CD8-positive, alpha-beta memory T cell (primary cell): ENCODE measurements at regions of chr1 and their contacts with region 1.

Region 1: DNA sequence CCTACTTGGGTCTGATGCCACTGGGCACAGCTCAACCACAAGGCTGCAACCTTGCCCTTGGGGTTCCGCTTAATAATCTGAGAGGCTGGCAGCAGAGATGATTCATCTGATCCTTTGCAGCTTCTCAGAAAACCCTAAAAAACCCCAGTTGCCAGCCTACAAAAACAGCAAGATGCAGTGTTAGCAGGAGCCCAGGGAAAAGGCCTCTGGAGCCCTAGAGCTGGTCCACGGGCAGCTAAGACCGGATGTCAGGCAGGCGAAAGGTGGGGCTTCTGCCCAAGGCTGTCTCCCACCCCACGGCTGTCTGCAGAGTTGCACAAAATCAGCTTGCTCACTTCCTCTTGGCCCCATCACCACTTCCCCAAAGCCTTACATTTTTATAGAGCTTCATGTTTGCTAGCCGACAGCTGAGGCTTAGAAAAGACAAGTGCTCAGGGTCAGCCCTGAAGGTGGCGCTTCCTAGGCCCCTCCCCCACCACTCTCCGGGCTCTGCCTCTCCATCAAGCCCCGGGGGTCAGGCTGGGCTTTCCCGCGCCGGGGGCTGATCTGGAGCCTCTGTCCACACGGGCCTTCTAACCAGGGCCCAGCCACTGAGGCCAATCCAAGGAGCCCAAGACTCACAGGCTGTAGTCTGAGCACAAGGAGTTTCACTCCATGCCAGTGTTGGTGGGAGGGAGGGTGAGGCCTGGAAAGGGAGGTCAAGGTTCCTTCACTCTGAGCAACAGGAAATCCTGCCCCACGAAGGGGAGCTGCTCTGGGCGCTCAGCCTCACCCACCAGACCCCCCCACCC is 4.2 kb upstream of the ADORA3 start:
- DNase-seq: peak; percentile 43 to 72 (median 52)
- H3K4me3 ChIP-seq: peak overlapping the region; percentile 68
- H3K4me3 Mint-ChIP-seq: peak overlapping the region; percentile 22 to 88 (median 83)
- H3K27ac ChIP-seq: peak overlapping the region; percentile 87
- H3K27ac Mint-ChIP-seq: peak overlapping the region; percentile 74 to 99 (median 96)
- H3K4me1 ChIP-seq: peaks cover 88% of the 10 kb centered on the region
- H3K4me1 Mint-ChIP-seq: peaks cover 57 to 61% (median 60%) of the 10 kb centered on the region in 3 donors
- H3K27me3 ChIP-seq: no peaks in the 10 kb centered on the region
- H3K27me3 Mint-ChIP-seq: no peaks in the 10 kb centered on the region

Region 2: GRCh38 chr1:111448918-111449702 is 58.5 kb before region 1 on chr1 and contains the starts of genes ATP5PB and WDR77:
- CTCF ChIA-PET with region 1: interaction called, 38 read pairs
- POLR2A ChIA-PET with region 1: interaction called, 6 read pairs
- DNase-seq: peak; percentile 83 to 96 (median 94)
- H3K4me3 ChIP-seq: peak within 1 kb of the TSS; percentile 98
- H3K4me3 Mint-ChIP-seq: peak within 1 kb of the TSS; percentile 98 to 100 (median 100)
- H3K27ac ChIP-seq: peak within 1 kb of the TSS; percentile 92
- H3K27ac Mint-ChIP-seq: peak within 1 kb of the TSS; percentile 89 to 100 (median 99)
- H3K4me1 ChIP-seq: peaks cover 59% of the 10 kb centered on the region
- H3K4me1 Mint-ChIP-seq: peaks cover 68 to 91% (median 81%) of the 10 kb centered on the region in 3 donors
- H3K27me3 ChIP-seq: no peaks in the 10 kb centered on the region
- H3K27me3 Mint-ChIP-seq: peaks cover 0 to 1% of the 10 kb centered on the region in 2 donors
- total RNA-seq, gene ATP5PB: 351 to 360 TPM
- total RNA-seq, gene WDR77: 73.2 to 74.7 TPM

Region 3: GRCh38 chr1:111497592-111497991 is 10.0 kb before region 1 on chr1:
- CTCF ChIA-PET with region 1: interaction called, 27 read pairs
- POLR2A ChIA-PET with region 1: interaction called, 4 read pairs
- DNase-seq: no peak
- H3K4me3 ChIP-seq: no peak overlapping the region
- H3K4me3 Mint-ChIP-seq: no peak overlapping the region
- H3K27ac ChIP-seq: no peak overlapping the region
- H3K27ac Mint-ChIP-seq: no peak overlapping the region
- H3K4me1 ChIP-seq: peaks cover 2% of the 10 kb centered on the region
- H3K4me1 Mint-ChIP-seq: peaks cover 3 to 18% (median 9%) of the 10 kb centered on the region in 3 donors
- H3K27me3 ChIP-seq: no peaks in the 10 kb centered on the region
- H3K27me3 Mint-ChIP-seq: no peaks in the 10 kb centered on the region

Region 4: GRCh38 chr1:111603979-111604378 is 96.4 kb after region 1 on chr1:
- CTCF ChIA-PET with region 1: interaction called, 17 read pairs
- POLR2A ChIA-PET with region 1: interaction called, 3 read pairs
- DNase-seq: peak; percentile 54 to 88 (median 79)
- H3K4me3 ChIP-seq: no peak overlapping the region
- H3K4me3 Mint-ChIP-seq: peak overlapping the region in 6 of 7 donors; percentile 66 to 82 (median 70)
- H3K27ac ChIP-seq: no peak overlapping the region
- H3K27ac Mint-ChIP-seq: peak overlapping the region; percentile 85 to 97 (median 92)
- H3K4me1 ChIP-seq: peaks cover 73% of the 10 kb centered on the region
- H3K4me1 Mint-ChIP-seq: peaks cover 72 to 79% (median 77%) of the 10 kb centered on the region in 3 donors
- H3K27me3 ChIP-seq: no peaks in the 10 kb centered on the region
- H3K27me3 Mint-ChIP-seq: no peaks in the 10 kb centered on the region

Region 5: GRCh38 chr1:111664652-111665051 is 157.0 kb after region 1 on chr1:
- CTCF ChIA-PET with region 1: interaction called, 10 read pairs
- POLR2A ChIA-PET with region 1: no interaction called
- DNase-seq: no peak
- H3K4me3 ChIP-seq: no peak overlapping the region
- H3K4me3 Mint-ChIP-seq: peak overlapping the region in 6 of 7 donors; percentile 2 to 66 (median 30)
- H3K27ac ChIP-seq: no peak overlapping the region
- H3K27ac Mint-ChIP-seq: peak overlapping the region in 7 of 8 donors; percentile 2 to 77 (median 70)
- H3K4me1 ChIP-seq: peaks cover 58% of the 10 kb centered on the region
- H3K4me1 Mint-ChIP-seq: peaks cover 53 to 72% (median 70%) of the 10 kb centered on the region in 3 donors
- H3K27me3 ChIP-seq: no peaks in the 10 kb centered on the region
- H3K27me3 Mint-ChIP-seq: no peaks in the 10 kb centered on the region

Region 6: GRCh38 chr1:111720274-111720976 is 212.8 kb after region 1 on chr1:
- CTCF ChIA-PET with region 1: interaction called, 51 read pairs
- POLR2A ChIA-PET with region 1: no interaction called
- DNase-seq: no peak
- H3K4me3 ChIP-seq: no peak overlapping the region
- H3K4me3 Mint-ChIP-seq: no peak overlapping the region
- H3K27ac ChIP-seq: no peak overlapping the region
- H3K27ac Mint-ChIP-seq: peak overlapping the region; percentile 26 to 85 (median 63)
- H3K4me1 ChIP-seq: peaks cover 10% of the 10 kb centered on the region
- H3K4me1 Mint-ChIP-seq: peaks cover 16 to 29% (median 27%) of the 10 kb centered on the region in 3 donors
- H3K27me3 ChIP-seq: no peaks in the 10 kb centered on the region
- H3K27me3 Mint-ChIP-seq: peaks cover 0 to 2% of the 10 kb centered on the region in 2 donors

Region 7: DNA sequence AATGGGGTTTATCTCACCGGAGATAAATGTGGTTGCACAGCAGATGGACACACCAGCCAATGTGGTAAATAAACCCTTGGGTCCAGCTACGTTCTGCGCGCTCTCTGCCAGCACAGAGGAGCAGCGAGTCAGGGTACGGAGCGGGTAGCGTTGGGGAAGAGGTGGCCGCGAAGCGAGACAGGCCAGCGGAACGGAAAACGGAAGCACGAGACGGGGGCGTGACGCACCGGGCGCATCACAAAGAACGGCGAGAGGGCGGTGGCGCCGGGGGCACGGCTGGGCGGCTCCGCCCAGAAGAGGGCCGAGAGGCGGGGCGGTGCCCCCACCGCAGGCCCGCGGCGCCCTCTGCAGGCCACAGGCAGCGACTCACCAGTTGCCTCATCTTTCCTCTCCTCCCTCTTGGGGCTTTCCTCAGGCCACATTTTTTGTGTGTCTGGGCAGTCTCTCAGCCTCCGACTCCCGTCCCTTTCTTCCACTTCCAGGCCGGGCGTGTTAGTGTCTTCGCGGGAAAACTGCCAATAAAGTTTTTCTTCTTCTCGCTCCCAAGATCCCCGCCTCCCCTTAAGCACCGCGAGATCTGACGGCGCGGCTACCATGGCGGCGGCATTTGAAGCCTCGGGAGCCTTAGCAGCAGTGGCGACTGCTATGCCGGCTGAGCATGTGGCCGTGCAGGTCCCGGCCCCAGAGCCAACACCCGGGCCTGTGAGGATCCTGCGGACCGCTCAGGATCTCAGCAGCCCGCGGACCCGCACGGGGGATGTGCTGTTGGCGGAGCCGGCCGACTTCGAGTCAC is 247.9 kb after region 1 on chr1 and contains the start of gene DDX20:
- CTCF ChIA-PET with region 1: interaction called, 22 read pairs
- POLR2A ChIA-PET with region 1: interaction called, 4 read pairs
- DNase-seq: peak; percentile 92 to 95 (median 95)
- H3K4me3 ChIP-seq: peak within 1 kb of the TSS; percentile 86
- H3K4me3 Mint-ChIP-seq: peak within 1 kb of the TSS; percentile 89 to 99 (median 95)
- H3K27ac ChIP-seq: peak within 1 kb of the TSS; percentile 85
- H3K27ac Mint-ChIP-seq: peak within 1 kb of the TSS; percentile 97 to 99 (median 98)
- H3K4me1 ChIP-seq: peaks cover 19% of the 10 kb centered on the region
- H3K4me1 Mint-ChIP-seq: peaks cover 35 to 52% (median 41%) of the 10 kb centered on the region in 3 donors
- H3K27me3 ChIP-seq: no peaks in the 10 kb centered on the region
- H3K27me3 Mint-ChIP-seq: peaks cover 0 to 1% of the 10 kb centered on the region in 2 donors
- total RNA-seq, gene DDX20: 21.8 to 22.7 TPM

Region 8: DNA sequence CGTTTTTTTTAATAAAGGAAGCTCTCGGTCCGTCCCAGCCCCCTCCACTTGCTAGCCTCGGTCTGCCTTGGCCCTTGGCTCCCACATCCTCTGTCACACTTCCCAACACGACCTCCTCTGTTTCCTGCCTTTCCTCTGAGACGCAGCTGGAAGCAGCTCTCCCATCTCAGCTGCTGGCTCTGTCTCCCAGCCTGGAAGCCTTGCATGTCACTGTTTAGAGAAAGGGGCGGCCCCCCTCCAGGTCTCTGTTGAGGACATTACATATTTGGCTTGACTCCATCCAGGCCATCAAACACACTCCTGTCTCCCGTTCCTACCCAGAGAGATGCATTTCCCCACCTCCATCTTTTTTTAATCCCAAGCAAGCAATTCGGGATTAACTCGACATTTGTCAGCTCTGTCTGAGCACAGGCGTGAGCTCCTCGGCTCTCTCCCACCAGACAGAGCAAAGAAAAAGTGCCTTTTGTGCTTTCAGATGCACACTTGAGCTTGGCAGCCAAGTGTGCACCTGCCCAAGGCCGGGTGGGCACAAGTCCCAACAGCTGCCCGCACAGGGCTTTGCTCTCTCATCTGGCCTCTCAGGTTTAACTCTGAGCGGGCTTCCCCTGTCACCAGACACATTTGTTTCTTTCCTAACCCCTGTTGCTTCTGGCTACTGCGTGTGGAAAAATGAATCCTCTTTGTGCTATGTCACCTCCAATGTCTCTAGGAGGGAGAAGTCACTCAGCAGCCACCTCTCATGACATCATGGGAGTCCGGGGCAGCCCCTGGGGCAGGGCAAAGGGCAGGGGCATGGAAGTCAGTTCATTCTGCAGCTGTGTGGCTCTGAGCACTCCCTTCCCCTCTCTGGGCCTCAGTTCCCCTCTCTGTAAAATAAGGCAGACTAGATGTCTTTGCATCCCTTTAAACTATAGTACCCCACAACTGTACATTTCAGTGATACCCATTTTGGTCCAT is 373.6 kb after region 1 on chr1:
- CTCF ChIA-PET with region 1: no interaction called
- POLR2A ChIA-PET with region 1: no interaction called
- DNase-seq: no peak
- H3K4me3 ChIP-seq: no peak overlapping the region
- H3K4me3 Mint-ChIP-seq: no peak overlapping the region
- H3K27ac ChIP-seq: no peak overlapping the region
- H3K27ac Mint-ChIP-seq: no peak overlapping the region
- H3K4me1 ChIP-seq: no peaks in the 10 kb centered on the region
- H3K4me1 Mint-ChIP-seq: no peaks in the 10 kb centered on the region
- H3K27me3 ChIP-seq: peaks cover 9% of the 10 kb centered on the region
- H3K27me3 Mint-ChIP-seq: peaks cover 21 to 77% of the 10 kb centered on the region in 2 donors